Gastrocnemius medialis (tissue), 4 donors: ENCODE measurements at regions of chr10 and their contacts with region 1.

Region 1: GRCh38 chr10:125160856-125161706 is 718 bp upstream of the CTBP2 start:
- DNase-seq: peak; percentile 63 to 73
- ATAC-seq: peak; percentile 32 to 48
- H3K4me3 ChIP-seq: peak overlapping the region; percentile 68 to 88 (median 84)
- H3K27ac ChIP-seq: peak overlapping the region; percentile 88 to 99 (median 97)
- H3K4me1 ChIP-seq: peaks cover 23 to 29% of the 10 kb centered on the region in 2 donors
- H3K27me3 ChIP-seq: no peaks in the 10 kb centered on the region
- CTCF ChIP-seq: peak; percentile 50 to 67 (median 56)
- POLR2A ChIP-seq: peak; percentile 67 to 81

Region 2: DNA sequence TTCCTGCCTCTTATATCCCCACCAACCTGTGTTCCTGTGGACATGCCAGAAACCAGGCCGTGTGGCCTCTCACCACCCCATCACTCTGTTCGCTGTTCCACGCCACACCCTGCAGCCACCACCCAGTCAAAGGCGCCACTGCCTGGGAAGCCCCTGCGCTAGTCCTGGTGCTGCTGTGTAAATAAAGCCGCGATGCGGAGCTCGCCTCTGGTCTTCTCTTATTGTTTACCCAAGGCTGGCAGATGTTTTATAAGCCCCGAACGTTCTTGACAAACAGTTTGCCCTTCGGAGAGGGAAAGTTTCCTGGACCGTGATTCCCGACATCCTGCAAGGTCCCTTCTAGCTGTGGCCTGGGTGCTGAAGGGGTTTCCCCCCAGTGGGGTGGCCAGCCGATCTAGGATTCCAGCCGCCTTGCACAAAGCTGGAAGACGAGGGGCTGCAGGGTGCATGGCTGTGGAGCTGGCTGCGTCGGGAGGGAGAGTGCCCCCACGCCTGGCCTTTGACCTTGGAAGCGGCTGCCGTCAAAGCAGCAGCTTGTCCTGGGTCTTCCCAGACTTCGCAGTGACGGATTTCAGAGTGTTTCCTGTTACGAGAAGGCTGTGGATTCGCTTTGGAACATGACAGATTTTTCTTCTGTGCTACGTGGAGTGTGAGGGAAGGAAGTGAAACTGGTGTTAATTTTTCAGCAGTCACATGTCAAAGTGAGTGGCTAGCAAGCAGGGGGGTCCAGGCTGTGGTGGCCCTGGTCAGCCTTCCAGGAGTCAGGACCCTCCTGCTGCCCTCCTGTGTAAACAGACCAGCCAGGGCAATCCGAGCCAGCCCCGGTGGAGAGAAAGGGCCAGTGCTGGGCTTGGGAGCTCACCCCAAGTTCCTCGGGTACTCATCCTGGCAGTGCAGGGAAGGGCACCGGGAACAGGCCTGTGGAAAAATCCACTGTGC is 637.9 kb before region 1 on chr10:
- in situ Hi-C with region 1: no loop called
- intact Hi-C with region 1: loop called (anchors 10 kb)
- DNase-seq: no peak
- ATAC-seq: no peak
- H3K4me3 ChIP-seq: peak overlapping the region in 2 of 4 donors; percentile 9 to 14
- H3K27ac ChIP-seq: peak overlapping the region in 3 of 4 donors; percentile 25 to 90 (median 65)
- H3K4me1 ChIP-seq: peaks cover 19 to 30% of the 10 kb centered on the region in 2 donors
- H3K27me3 ChIP-seq: no peaks in the 10 kb centered on the region
- CTCF ChIP-seq: no peak
- POLR2A ChIP-seq: no peak

Region 3: DNA sequence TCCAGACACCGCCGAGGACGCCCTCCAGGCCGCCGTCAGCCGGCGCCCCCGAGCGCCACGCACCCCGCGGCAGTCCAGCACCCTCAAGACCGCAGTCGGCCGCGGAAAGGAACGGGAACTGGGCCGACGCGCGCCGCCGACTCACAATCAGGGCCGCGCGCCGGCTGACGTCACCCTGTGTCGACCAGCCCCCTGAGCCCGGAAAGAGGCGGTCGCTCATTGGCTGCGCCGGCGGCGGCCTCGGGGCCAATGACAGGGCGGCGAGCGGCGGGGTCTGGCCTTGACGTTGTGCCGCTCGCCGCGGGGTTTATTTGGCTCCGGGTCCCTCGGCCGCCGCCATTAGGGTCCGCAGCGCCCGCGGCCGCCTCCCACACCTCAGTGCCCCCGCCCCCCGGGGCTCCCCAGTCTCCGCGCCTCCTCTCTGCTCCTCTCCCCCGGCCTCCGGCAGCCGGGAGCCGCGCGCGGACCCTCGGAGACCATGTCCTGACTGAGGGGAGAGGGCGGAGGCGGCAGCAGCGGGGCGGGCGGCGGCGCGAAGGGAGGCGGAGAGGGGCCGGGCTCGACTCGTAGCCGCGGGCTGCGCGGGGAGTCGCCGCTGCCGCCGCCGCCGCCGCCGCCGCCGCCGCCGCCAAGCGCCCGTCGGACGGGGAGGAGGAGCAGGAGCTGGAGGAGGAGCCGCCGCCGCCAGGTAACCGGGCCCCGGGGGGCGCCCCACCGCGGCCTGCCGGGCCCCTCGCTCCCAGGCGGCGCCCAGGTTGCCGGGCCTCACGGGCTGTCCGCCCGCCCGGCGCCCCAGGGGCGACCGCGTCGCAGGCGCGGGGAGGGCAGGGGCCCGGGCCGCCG is 244.3 kb before region 1 on chr10:
- in situ Hi-C with region 1: loop called in 2 of 4 experiments (anchors 10 to 25 kb)
- intact Hi-C with region 1: loop called (anchors 2 kb)
- DNase-seq: peak; percentile 98
- ATAC-seq: peak; percentile 66 to 67
- H3K4me3 ChIP-seq: peak overlapping the region; percentile 76 to 90 (median 80)
- H3K27ac ChIP-seq: peak overlapping the region; percentile 96 to 99 (median 98)
- H3K4me1 ChIP-seq: peaks cover 46 to 55% of the 10 kb centered on the region in 2 donors
- H3K27me3 ChIP-seq: no peaks in the 10 kb centered on the region
- CTCF ChIP-seq: peak in 1 of 5 experiments; percentile 8
- POLR2A ChIP-seq: peak; percentile 99

Region 4: DNA sequence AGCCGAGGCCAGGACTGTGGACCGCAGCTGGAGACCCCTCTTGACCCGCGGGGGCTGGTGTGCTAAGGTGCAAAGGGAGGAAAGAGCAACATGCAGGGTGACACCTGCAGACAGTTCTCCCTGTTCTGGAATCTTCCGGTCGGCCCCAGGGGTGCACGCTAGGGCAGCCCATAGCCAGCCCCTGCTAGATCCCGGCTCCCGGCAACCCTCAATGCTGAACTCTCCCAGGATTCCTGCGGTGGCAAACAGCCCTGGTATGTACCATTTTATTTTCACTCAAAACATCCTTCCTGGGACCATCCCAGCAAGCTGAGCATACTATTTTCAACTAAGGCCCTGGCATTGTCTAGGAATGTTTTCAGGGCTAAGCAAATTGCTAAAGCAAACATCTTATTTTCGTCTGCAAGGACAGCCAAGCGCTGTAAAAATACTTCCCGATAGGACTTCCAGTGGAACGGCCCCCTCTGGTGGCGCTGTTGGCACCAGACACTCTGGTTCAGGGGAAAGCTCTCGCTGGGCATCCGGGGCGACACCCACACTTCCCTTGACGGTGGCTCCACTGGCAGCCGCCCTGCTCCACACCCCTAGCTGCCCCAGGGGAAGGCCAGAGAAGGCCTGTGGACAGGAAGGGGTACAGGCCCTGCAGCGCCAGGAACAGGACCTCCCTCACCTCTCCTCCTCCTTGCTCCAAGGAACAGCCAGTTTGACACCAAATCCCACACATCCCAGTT is 100.1 kb before region 1 on chr10:
- in situ Hi-C with region 1: loop called in 2 of 4 experiments (anchors 10 kb)
- intact Hi-C with region 1: no loop called
- DNase-seq: peak; percentile 79 to 85
- ATAC-seq: peak; percentile 51 to 74
- H3K4me3 ChIP-seq: peak overlapping the region; percentile 10 to 32 (median 26)
- H3K27ac ChIP-seq: peak overlapping the region; percentile 91 to 93 (median 91)
- H3K4me1 ChIP-seq: peaks cover 98 to 99% of the 10 kb centered on the region in 2 donors
- H3K27me3 ChIP-seq: no peaks in the 10 kb centered on the region
- CTCF ChIP-seq: peak; percentile 71 to 92 (median 88)
- POLR2A ChIP-seq: no peak

Region 5: DNA sequence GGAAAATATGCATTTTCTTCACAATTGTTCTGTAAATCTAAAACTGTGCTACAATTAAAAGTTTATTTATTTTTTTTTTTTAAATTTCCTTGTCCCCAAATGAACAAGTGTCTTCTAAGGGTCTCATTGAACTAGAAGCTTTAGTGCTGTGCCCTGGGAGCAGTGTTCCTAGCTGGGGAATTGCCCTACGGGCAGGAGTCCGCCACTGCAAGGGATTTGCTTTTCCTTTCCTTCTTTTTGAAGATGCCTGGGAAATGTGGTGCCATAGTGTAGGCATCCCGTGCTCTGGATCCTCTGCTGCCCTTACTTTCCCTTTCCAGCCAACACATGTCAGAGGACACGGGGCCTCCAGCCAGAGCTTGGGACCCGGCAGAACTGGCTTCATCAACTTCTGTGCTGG is 176.4 kb after region 1 on chr10:
- in situ Hi-C with region 1: loop called in 2 of 4 experiments (anchors 10 kb)
- intact Hi-C with region 1: loop called (anchors 2 kb)
- DNase-seq: no peak
- ATAC-seq: no peak
- H3K4me3 ChIP-seq: no peak overlapping the region
- H3K27ac ChIP-seq: no peak overlapping the region
- H3K4me1 ChIP-seq: peaks cover 0 to 8% of the 10 kb centered on the region in 2 donors
- H3K27me3 ChIP-seq: no peaks in the 10 kb centered on the region
- CTCF ChIP-seq: no peak
- POLR2A ChIP-seq: no peak

Region 6: GRCh38 chr10:125719146-125720001 is 558.3 kb after region 1 on chr10 and contains the start of gene EDRF1:
- in situ Hi-C with region 1: no loop called
- intact Hi-C with region 1: loop called (anchors 5 kb)
- DNase-seq: peak; percentile 96 to 99
- ATAC-seq: peak; percentile 99 to 100
- H3K4me3 ChIP-seq: peak within 1 kb of the TSS; percentile 82 to 99 (median 95)
- H3K27ac ChIP-seq: peak within 1 kb of the TSS; percentile 84 to 88 (median 88)
- H3K4me1 ChIP-seq: peaks cover 12 to 17% of the 10 kb centered on the region in 2 donors
- H3K27me3 ChIP-seq: no peaks in the 10 kb centered on the region
- CTCF ChIP-seq: no peak
- POLR2A ChIP-seq: peak; percentile 32 to 71
- total RNA-seq, gene EDRF1: 8.1 to 19.4 (median 10.3) TPM